T-cell (primary cell): ENCODE measurements at regions of chr1 and their contacts with region 1.

Region 1: GRCh38 chr1:232856541-232856940 is 51.3 kb downstream of the MAP10 start:
- DNase-seq: no peak
- ATAC-seq: no peak
- H3K4me3 ChIP-seq: no peak overlapping the region
- H3K4me3 Mint-ChIP-seq: no peak overlapping the region
- H3K27ac ChIP-seq: no peak overlapping the region
- H3K27ac Mint-ChIP-seq: no peak overlapping the region
- H3K4me1 ChIP-seq: no peaks in the 10 kb centered on the region
- H3K4me1 Mint-ChIP-seq: no peaks in the 10 kb centered on the region
- H3K27me3 ChIP-seq: peaks cover 0 to 3% of the 10 kb centered on the region in 2 experiments
- H3K27me3 Mint-ChIP-seq: peaks cover 1 to 5% of the 10 kb centered on the region in 2 donors

Region 2: GRCh38 chr1:232767305-232768074 is 89.1 kb before region 1 on chr1:
- CTCF ChIA-PET with region 1: no interaction called
- POLR2A ChIA-PET with region 1: interaction called in 1 of 2 experiments, 13 read pairs
- DNase-seq: peak in 1 of 35 experiments; percentile 3
- ATAC-seq: no peak
- H3K4me3 ChIP-seq: no peak overlapping the region
- H3K4me3 Mint-ChIP-seq: no peak overlapping the region
- H3K27ac ChIP-seq: no peak overlapping the region
- H3K27ac Mint-ChIP-seq: no peak overlapping the region
- H3K4me1 ChIP-seq: no peaks in the 10 kb centered on the region
- H3K4me1 Mint-ChIP-seq: no peaks in the 10 kb centered on the region
- H3K27me3 ChIP-seq: peaks cover 0 to 2% of the 10 kb centered on the region in 2 experiments
- H3K27me3 Mint-ChIP-seq: peaks cover 11 to 14% of the 10 kb centered on the region in 2 donors